Activated CD8-positive, alpha-beta T cell treated with anti-CD3 and anti-CD28 coated beads, Interleukin-2, amount 10 ng/mL, durations not matched to agents 7 days and 5 days (primary cell): ENCODE measurements at regions of chr16 and their contacts with region 1.

Region 1: GRCh38 chr16:67017810-67018488 is 11.0 kb upstream of the CBFB start:
- DNase-seq: peak; percentile 94
- ATAC-seq: peak; percentile 78
- H3K4me3 Mint-ChIP-seq: no peak overlapping the region
- H3K27ac Mint-ChIP-seq: peak overlapping the region; percentile 54
- H3K4me1 Mint-ChIP-seq: peaks cover 46% of the 10 kb centered on the region
- H3K27me3 Mint-ChIP-seq: no peaks in the 10 kb centered on the region

Region 2: DNA sequence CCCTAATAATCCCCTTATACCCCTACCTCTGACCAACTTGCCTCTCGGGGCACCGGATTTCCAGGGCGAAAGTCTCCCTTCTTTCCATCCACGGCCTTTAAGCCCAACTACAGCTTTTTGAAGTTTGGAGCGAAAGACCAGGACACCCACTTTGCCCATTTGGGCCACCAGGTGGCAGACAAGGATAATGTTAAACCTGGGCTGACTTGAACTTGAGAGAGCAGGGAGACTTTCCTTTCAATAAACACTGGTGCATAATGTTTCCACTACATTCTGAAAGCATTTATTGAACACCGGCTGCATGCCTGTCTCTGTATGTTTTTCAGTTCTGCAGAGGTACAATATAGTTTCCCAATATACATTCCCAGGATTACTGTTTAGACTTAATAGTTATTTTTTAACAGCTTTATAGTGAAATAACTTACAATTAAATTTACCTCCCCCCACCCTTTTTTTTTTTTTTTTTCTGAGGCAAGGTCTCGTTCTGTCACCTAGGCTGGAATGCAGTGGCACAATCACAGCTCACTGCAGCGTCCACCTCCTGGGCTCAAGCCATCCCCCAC is 63.8 kb before region 1 on chr16:
- CTCF ChIA-PET with region 1: interaction called, 31 read pairs
- POLR2A ChIA-PET with region 1: no interaction called
- DNase-seq: peak; percentile 87
- ATAC-seq: peak; percentile 98
- H3K4me3 Mint-ChIP-seq: no peak overlapping the region
- H3K27ac Mint-ChIP-seq: no peak overlapping the region
- H3K4me1 Mint-ChIP-seq: peaks cover 22% of the 10 kb centered on the region
- H3K27me3 Mint-ChIP-seq: peaks cover 33% of the 10 kb centered on the region

Region 3: DNA sequence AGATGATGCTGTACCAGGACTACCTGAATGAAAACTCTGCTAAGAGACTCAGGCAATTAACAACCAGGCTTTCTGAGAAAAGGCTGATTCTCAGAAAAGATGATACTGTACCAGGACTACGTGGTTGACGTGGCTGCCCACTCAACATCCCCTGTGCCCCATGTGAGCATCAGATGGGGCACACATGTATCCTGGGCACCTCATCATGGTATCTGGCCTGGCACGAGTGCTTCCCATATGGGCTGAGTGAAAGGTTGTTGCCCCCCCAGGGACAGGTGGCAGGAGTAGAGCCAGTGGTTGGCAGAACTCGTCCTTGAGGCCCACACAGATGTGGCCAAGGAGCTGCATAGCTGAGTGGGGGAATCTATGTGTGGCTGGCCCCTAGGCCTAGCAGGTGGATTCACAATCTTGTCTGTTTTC is 33.0 kb before region 1 on chr16:
- CTCF ChIA-PET with region 1: interaction called, 24 read pairs
- POLR2A ChIA-PET with region 1: interaction called, 14 read pairs
- DNase-seq: peak; percentile 78
- ATAC-seq: peak; percentile 83
- H3K4me3 Mint-ChIP-seq: peak overlapping the region; percentile 0
- H3K27ac Mint-ChIP-seq: peak overlapping the region; percentile 92
- H3K4me1 Mint-ChIP-seq: peaks cover 67% of the 10 kb centered on the region
- H3K27me3 Mint-ChIP-seq: no peaks in the 10 kb centered on the region

Region 4: GRCh38 chr16:67006930-67007658 is 10.9 kb before region 1 on chr16:
- CTCF ChIA-PET with region 1: interaction called, 13 read pairs
- POLR2A ChIA-PET with region 1: interaction called, 8 read pairs
- DNase-seq: no peak
- ATAC-seq: no peak
- H3K4me3 Mint-ChIP-seq: no peak overlapping the region
- H3K27ac Mint-ChIP-seq: no peak overlapping the region
- H3K4me1 Mint-ChIP-seq: peaks cover 33% of the 10 kb centered on the region
- H3K27me3 Mint-ChIP-seq: no peaks in the 10 kb centered on the region

Region 5: DNA sequence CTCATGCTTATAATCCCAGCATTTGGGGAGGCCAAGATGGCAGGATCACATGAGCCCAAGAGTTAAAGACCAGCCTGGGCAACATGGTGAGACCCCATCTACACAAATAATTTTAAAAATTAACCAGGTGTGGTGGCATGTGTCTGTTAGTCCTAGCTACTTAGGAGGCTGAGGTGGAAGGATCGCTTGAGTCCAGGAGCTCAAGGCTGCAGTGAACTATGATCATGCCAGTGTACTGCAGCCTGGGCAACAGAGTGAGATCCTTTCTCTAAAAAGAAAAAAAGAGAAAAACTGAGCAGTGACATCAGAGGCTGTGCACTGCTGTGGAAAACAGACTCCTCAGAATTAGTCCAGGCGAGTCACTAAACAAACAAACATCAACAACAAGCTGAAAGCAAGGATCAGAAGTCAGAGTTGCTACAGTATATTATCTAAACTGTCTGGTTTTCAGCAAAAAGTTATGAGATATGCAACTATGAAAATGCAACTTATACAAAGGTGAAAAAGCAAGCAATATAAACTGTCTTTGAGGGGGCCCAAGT is 50.3 kb after region 1 on chr16:
- CTCF ChIA-PET with region 1: interaction called, 11 read pairs
- POLR2A ChIA-PET with region 1: interaction called, 3 read pairs
- DNase-seq: no peak
- ATAC-seq: no peak
- H3K4me3 Mint-ChIP-seq: no peak overlapping the region
- H3K27ac Mint-ChIP-seq: no peak overlapping the region
- H3K4me1 Mint-ChIP-seq: peaks cover 7% of the 10 kb centered on the region
- H3K27me3 Mint-ChIP-seq: no peaks in the 10 kb centered on the region

Region 6: DNA sequence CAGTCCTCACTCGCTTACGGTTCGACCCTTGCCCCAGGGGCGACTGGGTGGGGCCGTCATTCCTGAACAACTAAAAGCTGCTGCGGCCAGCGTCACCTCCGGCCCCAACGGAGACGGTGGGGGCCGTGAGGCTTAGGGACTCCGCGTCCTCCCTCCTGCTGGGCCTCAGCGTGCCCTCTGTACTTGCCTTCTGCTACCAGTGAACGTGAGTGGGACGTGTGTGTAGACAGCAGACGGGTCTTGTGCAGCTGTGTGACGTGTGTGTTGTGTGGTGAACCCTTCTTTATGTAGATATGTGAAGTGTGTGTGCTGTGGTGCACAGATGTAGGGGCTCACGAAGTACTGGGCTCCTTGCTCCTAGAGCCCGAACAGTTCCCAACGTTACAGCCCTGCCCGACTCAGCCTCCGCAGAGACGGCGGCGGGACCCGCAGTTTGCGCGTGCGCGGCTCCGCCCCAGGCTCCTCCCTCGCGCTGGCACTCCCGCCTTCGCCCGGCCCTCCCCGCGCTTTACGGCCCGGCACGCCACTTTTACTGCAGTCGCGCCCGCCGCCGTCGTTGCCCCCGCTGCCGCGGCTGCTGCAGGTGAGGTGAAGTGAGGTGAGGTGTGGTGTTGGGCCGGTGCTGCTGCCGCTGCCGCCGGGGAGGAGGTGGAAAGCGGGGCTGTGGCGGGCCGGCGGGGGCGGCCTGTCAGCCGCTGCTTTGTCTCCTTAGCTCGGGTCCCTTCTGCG is 91.6 kb after region 1 on chr16 and contains the start of gene PHAF1:
- CTCF ChIA-PET with region 1: interaction called, 134 read pairs
- POLR2A ChIA-PET with region 1: no interaction called
- DNase-seq: peak; percentile 95
- ATAC-seq: peak; percentile 95
- H3K4me3 Mint-ChIP-seq: peak within 1 kb of the TSS; percentile 93
- H3K27ac Mint-ChIP-seq: peak within 1 kb of the TSS; percentile 83
- H3K4me1 Mint-ChIP-seq: peaks cover 28% of the 10 kb centered on the region
- H3K27me3 Mint-ChIP-seq: no peaks in the 10 kb centered on the region
- total RNA-seq, gene PHAF1: 16.5 TPM

Region 7: DNA sequence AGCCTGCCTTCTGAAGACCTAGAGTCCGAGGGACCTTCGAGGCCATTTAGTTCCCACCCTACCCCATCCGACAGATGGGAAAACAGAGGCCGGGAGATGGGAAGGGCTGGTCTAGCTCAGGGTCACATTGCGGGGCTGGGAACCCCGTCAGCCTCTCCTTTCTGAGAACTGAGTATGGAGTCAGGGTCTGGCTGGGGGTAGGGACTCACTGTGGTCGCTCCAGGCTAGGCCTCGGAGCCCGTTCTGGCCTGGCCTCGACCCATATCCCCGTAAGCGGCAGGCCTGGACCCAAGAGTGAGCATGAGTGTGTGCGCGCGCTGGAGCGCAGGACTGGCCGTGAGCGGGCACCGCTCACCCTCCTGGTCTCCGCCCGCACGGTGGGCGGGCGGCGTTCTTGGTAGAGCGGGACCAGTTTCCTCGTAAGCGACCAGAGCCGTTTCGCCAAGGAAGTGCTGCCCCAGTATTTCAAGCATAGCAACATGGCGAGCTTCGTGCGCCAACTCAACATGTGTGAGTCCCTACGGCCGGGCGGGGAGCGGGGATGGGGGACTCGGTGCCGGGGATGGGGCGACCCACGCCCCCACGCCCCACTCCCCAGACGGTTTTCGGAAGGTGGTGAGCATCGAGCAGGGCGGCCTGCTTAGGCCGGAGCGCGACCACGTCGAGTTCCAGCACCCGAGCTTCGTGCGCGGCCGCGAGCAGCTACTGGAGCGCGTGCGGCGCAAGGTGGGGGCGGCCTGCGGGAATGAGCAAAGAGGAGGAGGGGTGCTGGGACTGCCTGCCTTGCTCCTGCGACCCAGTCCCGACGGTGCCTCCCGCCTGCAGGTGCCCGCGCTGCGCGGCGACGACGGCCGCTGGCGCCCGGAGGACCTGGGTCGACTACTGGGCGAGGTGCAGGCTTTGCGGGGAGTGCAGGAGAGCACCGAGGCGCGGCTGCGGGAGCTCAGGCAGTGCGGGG is 147.5 kb after region 1 on chr16:
- CTCF ChIA-PET with region 1: interaction called, 75 read pairs
- POLR2A ChIA-PET with region 1: interaction called, 7 read pairs
- DNase-seq: no peak
- ATAC-seq: no peak
- H3K4me3 Mint-ChIP-seq: peak overlapping the region; percentile 42
- H3K27ac Mint-ChIP-seq: no peak overlapping the region
- H3K4me1 Mint-ChIP-seq: peaks cover 63% of the 10 kb centered on the region
- H3K27me3 Mint-ChIP-seq: peaks cover 47% of the 10 kb centered on the region